Colonic mucosa (tissue), 4 donors: ENCODE measurements at regions of chr1 and their contacts with region 1.

Region 1: GRCh38 chr1:151968058-151968457 is 25.6 kb downstream of the S100A10 start:
- DNase-seq: peak; percentile 74
- H3K4me3 ChIP-seq: no peak overlapping the region
- H3K27ac ChIP-seq: no peak overlapping the region
- H3K4me1 ChIP-seq: peaks cover 6% of the 10 kb centered on the region
- H3K27me3 ChIP-seq: no peaks in the 10 kb centered on the region
- CTCF ChIP-seq: peak; percentile 63

Region 2: GRCh38 chr1:151934048-151934493 is 34.0 kb before region 1 on chr1:
- intact Hi-C with region 1: loop called (anchors 5 kb)
- DNase-seq: peak; percentile 74
- H3K4me3 ChIP-seq: no peak overlapping the region
- H3K27ac ChIP-seq: no peak overlapping the region
- H3K4me1 ChIP-seq: no peaks in the 10 kb centered on the region
- H3K27me3 ChIP-seq: no peaks in the 10 kb centered on the region
- CTCF ChIP-seq: peak; percentile 83

Region 3: DNA sequence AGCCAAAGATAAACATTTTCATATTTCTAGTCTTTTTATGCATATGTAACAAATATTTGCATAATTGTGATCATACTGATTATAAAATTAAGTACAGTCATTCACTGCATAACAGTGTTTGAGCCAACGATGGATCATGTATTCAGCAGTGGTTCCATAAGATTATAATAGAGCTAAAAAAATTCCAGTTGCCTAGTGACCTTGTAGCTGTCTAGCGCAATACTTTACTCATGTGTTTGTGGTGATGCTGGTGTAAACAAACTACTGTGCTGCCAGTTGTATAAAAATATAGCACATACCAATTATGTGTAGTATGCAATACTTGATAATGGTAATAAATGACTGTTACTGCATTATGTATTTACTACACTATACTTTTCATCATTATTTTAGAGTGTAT is 27.7 kb after region 1 on chr1:
- intact Hi-C with region 1: loop called (anchors 2 kb)
- DNase-seq: peak; percentile 9
- H3K4me3 ChIP-seq: no peak overlapping the region
- H3K27ac ChIP-seq: peak overlapping the region; percentile 99
- H3K4me1 ChIP-seq: peaks cover 4% of the 10 kb centered on the region
- H3K27me3 ChIP-seq: no peaks in the 10 kb centered on the region
- CTCF ChIP-seq: no peak